GM12878 (cell line): ENCODE measurements at regions of chr16 and their contacts with region 1.

Region 1: GRCh38 chr16:47141773-47142485 is 1.8 kb downstream of the NETO2 start:
- DNase-seq: peak; percentile 86
- ATAC-seq: peak; percentile 75
- H3K4me3 ChIP-seq: peak overlapping the region; percentile 79
- H3K27ac ChIP-seq: peak overlapping the region; percentile 52
- H3K4me1 ChIP-seq: peaks cover 13% of the 10 kb centered on the region
- H3K27me3 ChIP-seq: no peaks in the 10 kb centered on the region
- CTCF ChIP-seq: peak; percentile 95 to 99 (median 99); a peak in 5 of 6 replicates
- EP300 ChIP-seq: no peak
- POLR2A ChIP-seq: peak; percentile 76
- RAD21 ChIP-seq: peak; percentile 92

Region 2: GRCh38 chr16:46783800-46784199 is 358.1 kb before region 1 on chr16:
- CTCF ChIA-PET with region 1: no interaction called
- POLR2A ChIA-PET with region 1: no interaction called
- RAD21 ChIA-PET with region 1: no interaction called
- SMC1A ChIA-PET with region 1: no interaction called
- in situ Hi-C with region 1: no loop called
- intact Hi-C with region 1: no loop called
- DNase-seq: no peak
- ATAC-seq: peak; percentile 39
- H3K4me3 ChIP-seq: no peak overlapping the region
- H3K27ac ChIP-seq: 0 out of 2 replicates have a peak overlapping the region, but pooled peaks have one; percentile 9
- H3K4me1 ChIP-seq: peaks cover 46% of the 10 kb centered on the region
- H3K27me3 ChIP-seq: no peaks in the 10 kb centered on the region
- CTCF ChIP-seq: no peak
- EP300 ChIP-seq: no peak; a peak in 1 of 4 replicates
- POLR2A ChIP-seq: no peak
- RAD21 ChIP-seq: no peak

Region 3: GRCh38 chr16:46947900-46948547 is 193.9 kb before region 1 on chr16:
- CTCF ChIA-PET with region 1: interaction called, 20 read pairs
- POLR2A ChIA-PET with region 1: no interaction called
- RAD21 ChIA-PET with region 1: interaction called, 13 read pairs
- SMC1A ChIA-PET with region 1: interaction called, 8 read pairs
- in situ Hi-C with region 1: loop called (anchors 5 kb)
- intact Hi-C with region 1: loop called (anchors 2 kb)
- DNase-seq: peak; percentile 32
- ATAC-seq: peak; percentile 90
- H3K4me3 ChIP-seq: no peak overlapping the region
- H3K27ac ChIP-seq: no peak overlapping the region
- H3K4me1 ChIP-seq: peaks cover 5% of the 10 kb centered on the region; the same call in 1 of the 2 replicates
- H3K27me3 ChIP-seq: no peaks in the 10 kb centered on the region
- CTCF ChIP-seq: peak; percentile 58 to 77 (median 59); a peak in 5 of 6 replicates
- EP300 ChIP-seq: no peak
- POLR2A ChIP-seq: no peak
- RAD21 ChIP-seq: peak; percentile 95

Region 4: DNA sequence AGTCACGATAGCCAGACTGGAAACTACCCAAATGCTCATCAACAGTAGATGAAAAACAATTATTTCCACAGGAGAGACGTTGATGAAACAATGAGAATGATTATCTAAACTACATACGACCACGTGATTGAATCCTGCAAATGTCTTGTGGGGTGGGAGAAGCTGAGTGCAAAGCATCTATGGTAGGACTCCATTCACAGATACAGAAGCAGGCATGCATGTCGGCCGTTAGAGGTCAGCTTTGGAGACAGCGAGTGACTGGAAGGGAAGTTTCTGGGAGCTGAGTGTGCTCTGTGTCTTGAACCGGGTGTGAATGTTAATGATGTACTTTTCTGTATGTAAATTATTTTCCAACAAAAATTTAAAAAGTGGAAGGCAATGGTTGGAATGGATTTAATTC is 96.9 kb before region 1 on chr16:
- CTCF ChIA-PET with region 1: interaction called, 162 read pairs
- POLR2A ChIA-PET with region 1: interaction called, 7 read pairs
- RAD21 ChIA-PET with region 1: interaction called, 127 read pairs
- SMC1A ChIA-PET with region 1: interaction called, 101 read pairs
- in situ Hi-C with region 1: loop called (anchors 5 kb)
- intact Hi-C with region 1: no loop called
- DNase-seq: no peak
- ATAC-seq: no peak
- H3K4me3 ChIP-seq: no peak overlapping the region
- H3K27ac ChIP-seq: no peak overlapping the region
- H3K4me1 ChIP-seq: peaks cover 22% of the 10 kb centered on the region
- H3K27me3 ChIP-seq: no peaks in the 10 kb centered on the region
- CTCF ChIP-seq: no peak
- EP300 ChIP-seq: no peak
- POLR2A ChIP-seq: no peak
- RAD21 ChIP-seq: no peak

Region 5: DNA sequence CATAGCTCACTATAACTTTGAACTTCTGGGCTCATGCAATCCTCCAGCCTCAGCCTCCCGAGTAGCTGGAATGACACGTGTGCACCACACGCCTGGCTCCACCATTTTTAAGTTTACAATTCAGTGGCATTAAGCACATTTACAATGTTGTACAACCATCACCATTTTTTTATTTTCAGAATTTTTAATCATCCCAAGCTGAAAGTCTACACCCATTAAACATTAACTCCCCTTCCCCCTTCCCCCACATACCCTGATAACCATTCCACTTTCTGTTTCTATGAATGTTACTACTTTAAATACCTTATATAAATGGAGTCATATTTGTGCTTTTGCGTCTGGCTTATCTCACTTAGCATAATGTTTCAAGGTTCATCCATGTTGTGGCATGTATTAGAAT is 16.2 kb before region 1 on chr16:
- CTCF ChIA-PET with region 1: interaction called, 52 read pairs
- POLR2A ChIA-PET with region 1: interaction called, 4 read pairs
- RAD21 ChIA-PET with region 1: interaction called, 21 read pairs
- SMC1A ChIA-PET with region 1: interaction called, 19 read pairs
- in situ Hi-C with region 1: no loop called
- intact Hi-C with region 1: no loop called
- DNase-seq: no peak
- ATAC-seq: no peak
- H3K4me3 ChIP-seq: no peak overlapping the region
- H3K27ac ChIP-seq: no peak overlapping the region
- H3K4me1 ChIP-seq: no peaks in the 10 kb centered on the region
- H3K27me3 ChIP-seq: no peaks in the 10 kb centered on the region
- CTCF ChIP-seq: no peak
- EP300 ChIP-seq: no peak
- POLR2A ChIP-seq: no peak
- RAD21 ChIP-seq: no peak

Region 6: GRCh38 chr16:47213761-47214440 is 72.0 kb after region 1 on chr16:
- CTCF ChIA-PET with region 1: no interaction called
- POLR2A ChIA-PET with region 1: no interaction called
- RAD21 ChIA-PET with region 1: no interaction called
- SMC1A ChIA-PET with region 1: no interaction called
- in situ Hi-C with region 1: no loop called
- intact Hi-C with region 1: no loop called
- DNase-seq: no peak
- ATAC-seq: no peak
- H3K4me3 ChIP-seq: no peak overlapping the region
- H3K27ac ChIP-seq: no peak overlapping the region
- H3K4me1 ChIP-seq: no peaks in the 10 kb centered on the region
- H3K27me3 ChIP-seq: no peaks in the 10 kb centered on the region
- CTCF ChIP-seq: no peak
- EP300 ChIP-seq: no peak
- POLR2A ChIP-seq: no peak
- RAD21 ChIP-seq: no peak

Region 7: GRCh38 chr16:47599512-47599911 is 457.6 kb after region 1 on chr16:
- CTCF ChIA-PET with region 1: interaction called, 3 read pairs
- POLR2A ChIA-PET with region 1: no interaction called
- RAD21 ChIA-PET with region 1: no interaction called
- SMC1A ChIA-PET with region 1: no interaction called
- in situ Hi-C with region 1: no loop called
- intact Hi-C with region 1: loop called (anchors 10 kb)
- DNase-seq: peak; percentile 28
- ATAC-seq: peak; percentile 70
- H3K4me3 ChIP-seq: no peak overlapping the region
- H3K27ac ChIP-seq: peak overlapping the region; percentile 66
- H3K4me1 ChIP-seq: no peaks in the 10 kb centered on the region; the same call in 1 of the 2 replicates
- H3K27me3 ChIP-seq: no peaks in the 10 kb centered on the region
- CTCF ChIP-seq: no peak
- EP300 ChIP-seq: no peak
- POLR2A ChIP-seq: no peak
- RAD21 ChIP-seq: no peak

Region 8: DNA sequence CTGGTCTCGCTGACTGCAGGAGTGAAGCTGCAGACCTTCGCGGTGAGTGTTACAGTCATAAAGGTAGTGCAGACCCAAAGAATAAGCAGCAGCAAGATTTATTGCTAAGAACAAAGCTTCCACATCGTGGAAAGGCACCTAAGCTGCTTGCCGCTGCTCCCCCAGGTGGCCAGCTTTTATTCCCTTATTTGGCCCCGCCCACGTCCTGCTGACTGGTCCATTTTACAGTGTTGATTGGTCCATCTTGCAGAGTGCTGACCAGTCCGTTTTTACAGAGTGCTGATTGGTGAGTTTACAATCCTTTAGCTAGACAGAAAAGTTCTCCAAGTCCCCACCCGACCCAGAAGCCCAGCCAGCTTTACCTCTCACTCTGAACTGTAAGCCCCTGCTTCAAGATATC is 786.1 kb after region 1 on chr16:
- CTCF ChIA-PET with region 1: no interaction called
- POLR2A ChIA-PET with region 1: no interaction called
- RAD21 ChIA-PET with region 1: no interaction called
- SMC1A ChIA-PET with region 1: no interaction called
- in situ Hi-C with region 1: no loop called
- intact Hi-C with region 1: no loop called
- DNase-seq: no peak
- ATAC-seq: no peak
- H3K4me3 ChIP-seq: no peak overlapping the region
- H3K27ac ChIP-seq: no peak overlapping the region
- H3K4me1 ChIP-seq: no peaks in the 10 kb centered on the region
- H3K27me3 ChIP-seq: no peaks in the 10 kb centered on the region
- CTCF ChIP-seq: no peak
- EP300 ChIP-seq: no peak
- POLR2A ChIP-seq: no peak
- RAD21 ChIP-seq: no peak

Region 9: DNA sequence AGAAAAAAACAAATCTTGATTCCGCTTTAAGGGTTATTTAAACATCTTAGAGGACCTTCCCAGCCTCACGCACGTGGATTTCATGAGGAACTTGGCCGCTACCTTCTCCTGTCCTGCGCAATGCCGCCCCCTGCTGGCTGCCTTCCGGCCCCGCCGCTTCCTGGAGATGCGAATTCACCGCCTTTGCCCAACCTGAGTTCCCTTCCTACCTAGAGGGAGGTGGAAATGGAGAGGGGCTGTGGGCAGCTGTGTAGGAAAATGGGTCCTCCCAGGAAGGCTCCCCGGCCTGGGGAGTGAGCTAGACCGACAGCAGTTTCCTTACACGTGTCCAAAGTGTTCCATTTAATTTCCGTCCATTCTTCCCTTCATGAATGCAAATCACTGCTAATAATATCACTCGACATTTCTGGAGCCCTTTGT is 1014.9 kb after region 1 on chr16:
- CTCF ChIA-PET with region 1: interaction called, 26 read pairs
- POLR2A ChIA-PET with region 1: no interaction called
- RAD21 ChIA-PET with region 1: interaction called, 20 read pairs
- SMC1A ChIA-PET with region 1: interaction called, 8 read pairs
- in situ Hi-C with region 1: loop called (anchors 5 kb)
- intact Hi-C with region 1: loop called (anchors 2 kb)
- DNase-seq: no peak
- ATAC-seq: peak; percentile 81
- H3K4me3 ChIP-seq: no peak overlapping the region
- H3K27ac ChIP-seq: no peak overlapping the region
- H3K4me1 ChIP-seq: peaks cover 4% of the 10 kb centered on the region; the same call in 1 of the 2 replicates
- H3K27me3 ChIP-seq: no peaks in the 10 kb centered on the region; a peak in 1 of 4 replicates
- CTCF ChIP-seq: peak; percentile 90 to 96 (median 96)
- EP300 ChIP-seq: no peak
- POLR2A ChIP-seq: no peak
- RAD21 ChIP-seq: peak; percentile 83